HAP-1 (cell line): ENCODE measurements at regions of chr16 and their contacts with region 1.

Region 1: GRCh38 chr16:80804056-80804450 is 345 bp downstream of the CDYL2 start:
- DNase-seq: peak in 1 of 2 experiments; percentile 45
- H3K4me3 ChIP-seq: peak overlapping the region; percentile 39
- H3K4me1 ChIP-seq: no peaks in the 10 kb centered on the region
- H3K27me3 ChIP-seq: peaks cover 26% of the 10 kb centered on the region

Region 2: GRCh38 chr16:80466024-80466987 is 337.7 kb before region 1 on chr16:
- in situ Hi-C with region 1: no loop called
- DNase-seq: peak; percentile 42 to 79
- H3K4me3 ChIP-seq: no peak overlapping the region
- H3K4me1 ChIP-seq: peaks cover 6% of the 10 kb centered on the region
- H3K27me3 ChIP-seq: no peaks in the 10 kb centered on the region

Region 3: DNA sequence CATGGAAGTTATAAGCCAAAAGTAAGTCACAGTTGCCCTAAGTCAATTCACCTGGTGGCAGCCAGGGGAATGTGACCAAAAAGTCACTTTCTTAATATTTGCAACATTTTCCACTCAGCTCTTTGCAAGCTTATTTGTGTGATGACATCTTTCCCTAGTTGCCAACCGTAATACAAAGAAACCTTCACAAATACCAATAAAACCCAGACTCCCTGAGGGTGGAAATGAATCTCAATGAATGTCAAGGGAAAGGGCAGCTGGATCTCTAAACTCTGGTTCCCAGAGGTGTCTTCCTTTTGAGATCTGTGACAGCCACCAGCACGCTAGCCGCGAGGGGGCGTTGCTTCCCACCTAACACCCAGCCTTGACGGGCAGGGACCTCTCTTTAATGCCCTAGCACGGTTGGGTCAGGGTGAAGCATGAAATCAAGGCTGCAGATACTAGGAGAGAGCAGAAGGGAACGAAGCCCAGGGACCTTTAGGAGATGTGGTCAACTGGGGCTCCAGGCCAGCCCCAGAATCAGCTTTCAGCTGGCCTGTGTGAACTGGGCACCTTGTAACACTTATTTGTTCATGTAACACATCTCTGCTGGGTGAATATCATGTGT is 120.4 kb after region 1 on chr16:
- in situ Hi-C with region 1: loop called (anchors 25 kb)
- DNase-seq: peak; percentile 51 to 81
- H3K4me3 ChIP-seq: no peak overlapping the region
- H3K4me1 ChIP-seq: peaks cover 5% of the 10 kb centered on the region; the same call in 1 of the 2 replicates
- H3K27me3 ChIP-seq: no peaks in the 10 kb centered on the region